ENCODE measurements at regions of chr9 and their contacts with region 1.

Region 1: GRCh38 chr9:121322037-121322775 is 47.8 kb downstream of the STOM start:
- DNase-seq: no peak
- ATAC-seq: no peak
- H3K4me3 Mint-ChIP-seq: no peak overlapping the region
- H3K27ac Mint-ChIP-seq: peak overlapping the region; percentile 65
- H3K4me1 Mint-ChIP-seq: peaks cover 45% of the 10 kb centered on the region
- H3K27me3 Mint-ChIP-seq: no peaks in the 10 kb centered on the region

Region 2: DNA sequence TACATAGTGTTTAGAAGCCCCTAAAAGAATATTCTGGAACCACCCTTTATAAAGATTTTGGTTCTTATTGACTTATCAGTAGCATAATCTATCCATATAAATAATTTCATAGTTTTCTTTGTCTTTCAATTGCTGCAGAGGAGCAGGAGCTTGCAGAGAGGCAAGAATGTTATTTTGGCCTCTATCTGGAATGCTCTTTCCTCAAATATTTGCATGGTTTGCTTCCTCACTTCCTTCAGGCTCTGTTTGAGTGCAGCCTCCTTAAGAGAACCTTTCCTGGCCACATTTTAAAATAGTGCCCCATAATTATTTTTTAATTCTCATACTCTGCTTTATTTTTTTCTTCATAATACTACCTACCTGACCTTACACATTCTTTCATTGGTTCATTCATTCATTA is 273.6 kb before region 1 on chr9:
- CTCF ChIA-PET with region 1: no interaction called
- DNase-seq: no peak
- ATAC-seq: no peak
- H3K4me3 Mint-ChIP-seq: no peak overlapping the region
- H3K27ac Mint-ChIP-seq: no peak overlapping the region
- H3K4me1 Mint-ChIP-seq: no peaks in the 10 kb centered on the region
- H3K27me3 Mint-ChIP-seq: no peaks in the 10 kb centered on the region

Region 3: GRCh38 chr9:121107041-121107440 is 215.2 kb before region 1 on chr9:
- CTCF ChIA-PET with region 1: no interaction called
- DNase-seq: no peak
- ATAC-seq: peak; percentile 64
- H3K4me3 Mint-ChIP-seq: no peak overlapping the region
- H3K27ac Mint-ChIP-seq: peak overlapping the region; percentile 24
- H3K4me1 Mint-ChIP-seq: peaks cover 19% of the 10 kb centered on the region
- H3K27me3 Mint-ChIP-seq: no peaks in the 10 kb centered on the region

Region 4: DNA sequence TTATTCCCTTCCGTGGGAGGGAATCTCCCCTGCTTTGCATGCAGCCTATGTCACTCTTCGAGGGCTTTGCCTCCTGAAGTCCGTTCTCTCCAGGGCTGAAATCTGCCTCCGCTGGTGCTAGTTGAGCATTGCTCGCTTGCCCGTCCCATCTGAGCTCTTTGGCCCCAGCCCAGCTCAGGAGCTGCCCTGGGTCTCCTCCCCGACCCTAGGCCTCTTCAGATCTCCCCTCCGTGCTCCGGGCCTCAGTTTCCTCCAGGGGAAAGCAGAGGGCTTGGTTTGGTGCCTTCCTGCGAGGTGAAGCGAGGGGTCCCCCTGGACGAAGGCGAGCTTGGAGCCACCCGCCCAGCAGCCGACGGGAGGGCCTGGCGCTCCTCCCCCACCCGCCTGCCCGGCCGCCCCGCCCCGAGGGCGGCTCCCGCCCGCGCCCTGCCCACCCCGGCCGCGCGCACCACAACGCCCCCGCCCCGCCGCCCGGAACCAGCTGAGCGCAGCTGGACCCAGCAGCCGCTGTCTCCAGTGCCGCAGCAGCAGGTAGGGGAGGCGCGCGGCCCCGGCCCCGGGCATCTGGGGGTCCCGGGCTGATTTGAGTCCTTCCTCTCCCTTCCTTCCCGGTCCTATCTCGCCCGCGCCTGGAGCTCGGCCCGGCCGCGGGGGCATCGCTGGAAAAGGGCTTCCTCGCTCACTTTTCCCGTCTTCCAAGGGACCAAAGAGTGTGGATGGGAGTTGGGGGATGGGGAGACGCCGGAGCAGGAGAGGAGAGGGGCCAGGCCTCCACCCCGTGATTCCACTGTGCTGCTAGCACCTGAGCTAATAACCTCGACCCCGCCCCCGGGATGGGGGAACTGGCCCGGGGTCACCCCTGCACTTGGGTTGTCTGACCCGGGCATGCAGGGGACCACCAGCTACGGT is 54.3 kb before region 1 on chr9 and contains the start of gene GSN:
- CTCF ChIA-PET with region 1: interaction called, 17 read pairs
- DNase-seq: peak; percentile 71
- ATAC-seq: peak; percentile 91
- H3K4me3 Mint-ChIP-seq: peak within 1 kb of the TSS; percentile 60
- H3K27ac Mint-ChIP-seq: no peak within 1 kb of the TSS
- H3K4me1 Mint-ChIP-seq: peaks cover 16% of the 10 kb centered on the region
- H3K27me3 Mint-ChIP-seq: peaks cover 13% of the 10 kb centered on the region
- total RNA-seq, gene GSN: 3.2 to 8.0 TPM

Region 5: DNA sequence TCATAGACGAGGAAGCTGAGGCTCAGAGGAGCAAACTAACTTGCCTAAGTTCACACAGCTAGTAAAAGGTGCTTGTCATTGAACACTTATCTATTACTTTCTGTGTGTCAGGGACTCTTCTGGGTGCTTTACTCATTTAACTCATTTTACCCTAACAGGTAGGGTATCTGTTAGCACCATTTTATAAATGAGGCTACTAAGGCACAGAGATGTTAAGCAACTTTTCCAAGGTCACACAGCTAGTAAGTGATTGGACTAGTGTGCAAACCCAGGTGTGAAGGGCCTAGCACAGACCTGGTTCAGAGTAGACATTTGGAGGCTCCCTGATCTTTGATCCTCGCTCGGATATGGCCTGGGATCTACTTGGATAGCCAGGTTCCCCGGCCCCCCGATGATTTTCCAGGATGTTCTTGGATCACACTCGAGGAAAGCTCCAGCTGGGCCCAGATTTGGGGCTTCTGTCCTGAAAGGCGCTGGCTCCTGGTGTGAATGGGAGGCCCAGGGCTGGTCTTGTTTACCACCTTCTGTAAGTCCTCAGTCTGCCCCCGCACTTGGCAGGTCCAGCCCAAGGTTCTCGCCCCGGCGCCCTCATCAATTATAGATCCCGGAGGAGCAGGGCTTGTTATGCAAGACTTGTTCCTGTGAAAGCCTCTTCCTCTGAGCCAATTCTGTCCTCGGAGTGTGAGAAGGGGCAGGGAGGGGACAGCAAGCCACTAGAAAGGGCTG is 16.8 kb before region 1 on chr9:
- CTCF ChIA-PET with region 1: interaction called, 12 read pairs
- DNase-seq: no peak
- ATAC-seq: no peak
- H3K4me3 Mint-ChIP-seq: no peak overlapping the region
- H3K27ac Mint-ChIP-seq: no peak overlapping the region
- H3K4me1 Mint-ChIP-seq: peaks cover under 1% of the 10 kb centered on the region
- H3K27me3 Mint-ChIP-seq: peaks cover 5% of the 10 kb centered on the region

Region 6: DNA sequence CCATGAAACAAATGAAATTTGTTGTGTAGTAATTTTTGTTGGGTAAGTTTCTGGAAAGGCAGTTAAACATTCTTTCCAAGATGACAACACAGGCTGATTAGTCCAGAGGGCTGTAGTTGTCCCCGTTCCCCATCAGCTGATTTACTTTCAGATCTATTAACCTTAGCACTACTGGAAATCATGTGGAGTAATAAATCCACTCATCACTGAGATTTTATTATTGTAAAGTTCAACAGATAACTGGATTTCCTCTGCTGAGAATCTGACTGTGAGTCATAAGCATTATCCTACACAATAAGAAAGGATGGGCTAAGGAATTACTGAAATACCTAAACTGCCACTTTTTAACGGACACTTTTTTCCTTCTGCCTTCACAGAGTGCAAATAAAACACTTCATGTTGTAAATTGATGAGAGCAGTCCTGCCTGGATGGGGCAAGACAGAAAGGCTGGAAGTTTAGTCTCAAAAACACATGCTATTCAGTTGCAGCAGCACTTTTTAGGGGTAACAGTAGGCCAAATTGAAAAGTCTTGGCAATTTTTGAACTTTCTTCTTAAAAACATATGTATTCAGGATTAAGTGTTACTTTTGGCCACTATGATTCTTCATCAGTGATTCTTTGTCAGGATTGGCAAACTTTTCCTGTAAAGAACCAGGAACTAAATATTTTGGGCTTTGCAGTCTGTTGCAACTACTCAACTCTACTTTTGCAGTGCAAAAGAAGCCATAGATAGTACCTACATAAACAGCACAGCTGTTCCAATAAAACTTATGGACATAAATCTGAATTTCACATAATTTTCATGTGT is 40.8 kb after region 1 on chr9:
- CTCF ChIA-PET with region 1: interaction called, 49 read pairs
- DNase-seq: no peak
- ATAC-seq: no peak
- H3K4me3 Mint-ChIP-seq: peak overlapping the region; percentile 14
- H3K27ac Mint-ChIP-seq: peak overlapping the region; percentile 73
- H3K4me1 Mint-ChIP-seq: peaks cover 84% of the 10 kb centered on the region
- H3K27me3 Mint-ChIP-seq: no peaks in the 10 kb centered on the region

Region 7: DNA sequence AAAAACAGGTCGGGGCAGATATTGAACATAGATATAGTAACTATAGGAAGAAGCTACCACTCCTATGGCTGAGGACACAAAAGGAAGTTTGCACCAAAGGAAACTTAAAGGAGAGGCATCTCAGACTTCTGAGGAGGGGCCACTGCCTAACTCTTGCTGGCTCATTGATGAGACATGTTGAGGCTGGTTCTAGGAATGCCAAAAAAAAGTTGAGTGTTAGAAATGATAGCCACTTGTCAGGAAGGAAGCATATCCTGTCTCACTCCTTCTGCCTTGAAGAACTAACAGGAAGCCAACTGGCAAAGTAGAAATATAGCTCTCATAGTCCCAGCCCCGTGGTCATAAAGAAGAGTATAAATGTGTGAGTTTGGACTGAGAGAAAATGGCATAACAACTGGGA is 71.1 kb after region 1 on chr9:
- CTCF ChIA-PET with region 1: interaction called, 224 read pairs
- DNase-seq: no peak
- ATAC-seq: peak; percentile 45
- H3K4me3 Mint-ChIP-seq: no peak overlapping the region
- H3K27ac Mint-ChIP-seq: peak overlapping the region; percentile 73
- H3K4me1 Mint-ChIP-seq: peaks cover 36% of the 10 kb centered on the region
- H3K27me3 Mint-ChIP-seq: no peaks in the 10 kb centered on the region

Region 8: GRCh38 chr9:121424024-121424432 is 101.8 kb after region 1 on chr9:
- CTCF ChIA-PET with region 1: interaction called, 11 read pairs
- DNase-seq: no peak
- ATAC-seq: no peak
- H3K4me3 Mint-ChIP-seq: no peak overlapping the region
- H3K27ac Mint-ChIP-seq: no peak overlapping the region
- H3K4me1 Mint-ChIP-seq: no peaks in the 10 kb centered on the region
- H3K27me3 Mint-ChIP-seq: peaks cover 28% of the 10 kb centered on the region

Measured in activated CD8-positive, alpha-beta memory T cell treated with anti-CD3 and anti-CD28 coated beads, Interleukin-2, amount 10 ng/mL, durations not matched to agents 7 days and 5 days (primary cell).